GM18951 (cell line): ENCODE measurements at regions of chr10 and their contacts with region 1.

Region 1: DNA sequence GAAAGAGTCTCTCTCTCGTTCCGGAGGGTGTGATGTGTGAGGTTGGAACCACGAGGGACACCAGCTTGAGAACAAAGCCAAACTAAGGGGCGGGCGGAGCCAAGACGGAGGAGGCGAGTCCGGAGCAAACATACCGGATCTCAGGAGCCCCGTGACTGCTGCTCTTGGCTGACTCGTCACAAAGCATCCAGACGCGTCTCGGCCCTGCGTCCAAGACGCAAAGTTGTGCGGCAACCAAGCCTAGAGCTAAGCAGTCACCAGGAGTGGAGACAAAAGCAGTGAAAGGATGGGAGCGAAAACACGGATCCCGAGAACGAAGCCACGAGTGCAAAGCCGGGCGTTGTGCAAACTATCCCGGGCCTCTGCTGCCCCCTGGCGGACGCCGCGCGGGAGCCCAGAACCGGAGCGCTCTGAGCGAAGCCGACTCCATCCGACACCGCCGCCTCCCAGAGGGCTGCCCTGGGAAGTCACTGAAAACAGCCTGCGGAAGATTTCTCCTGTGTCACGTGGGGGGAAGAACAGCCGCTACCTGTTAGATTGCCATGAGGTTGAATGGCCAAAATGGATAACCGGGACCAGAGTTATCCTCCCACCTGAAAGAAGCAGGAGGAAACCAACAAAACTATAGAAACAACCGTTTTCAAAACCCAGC is 46.4 kb upstream of the TMEM72 start:
- POLR2A ChIP-seq: no peak

Region 2: DNA sequence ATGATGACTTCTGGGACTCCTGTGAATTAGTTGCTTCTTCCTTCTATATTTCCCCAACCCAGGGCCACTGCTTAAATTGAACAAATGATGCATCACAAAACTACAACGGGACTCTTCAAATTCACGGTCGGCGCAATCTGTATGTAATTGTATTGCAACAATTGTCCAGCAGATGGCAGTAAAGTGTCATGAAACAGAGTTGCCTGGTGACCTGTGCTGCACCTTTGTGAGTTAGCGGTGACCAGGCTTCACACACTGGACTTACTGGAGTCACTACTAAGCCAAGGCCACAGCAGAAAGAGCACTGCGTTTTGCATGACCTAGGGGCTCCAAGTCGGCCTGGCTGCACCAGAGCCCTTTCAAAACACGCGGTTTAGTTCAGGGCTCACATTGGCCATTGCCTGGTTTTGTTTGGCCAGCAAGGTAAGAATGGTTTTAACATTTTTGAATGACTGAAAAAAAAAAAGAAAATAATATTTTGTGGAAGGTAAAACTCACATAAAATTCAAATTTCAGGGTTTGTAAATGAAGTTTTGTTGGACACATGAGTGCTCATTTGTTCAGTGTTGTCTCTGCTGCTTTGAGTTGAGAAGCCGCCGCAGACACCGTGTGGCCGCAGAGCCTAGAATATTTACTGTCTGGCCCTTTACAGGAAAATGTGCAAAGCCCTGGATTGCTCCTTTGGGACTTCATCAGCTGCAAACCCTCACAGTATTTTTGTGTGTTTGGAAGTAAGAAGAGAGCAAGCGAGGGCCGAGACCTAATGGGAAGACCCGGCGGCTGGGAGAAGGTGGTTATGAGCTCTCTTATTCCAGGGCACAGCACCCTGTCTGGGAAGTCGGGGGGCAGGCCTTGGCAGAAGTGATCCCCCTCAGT is 1192.9 kb before region 1 on chr10:
- in situ Hi-C with region 1: loop called (anchors 25 kb)
- POLR2A ChIP-seq: no peak

Region 3: GRCh38 chr10:44386546-44387052 is 478.2 kb before region 1 on chr10:
- in situ Hi-C with region 1: loop called (anchors 25 kb)
- POLR2A ChIP-seq: no peak

Region 4: DNA sequence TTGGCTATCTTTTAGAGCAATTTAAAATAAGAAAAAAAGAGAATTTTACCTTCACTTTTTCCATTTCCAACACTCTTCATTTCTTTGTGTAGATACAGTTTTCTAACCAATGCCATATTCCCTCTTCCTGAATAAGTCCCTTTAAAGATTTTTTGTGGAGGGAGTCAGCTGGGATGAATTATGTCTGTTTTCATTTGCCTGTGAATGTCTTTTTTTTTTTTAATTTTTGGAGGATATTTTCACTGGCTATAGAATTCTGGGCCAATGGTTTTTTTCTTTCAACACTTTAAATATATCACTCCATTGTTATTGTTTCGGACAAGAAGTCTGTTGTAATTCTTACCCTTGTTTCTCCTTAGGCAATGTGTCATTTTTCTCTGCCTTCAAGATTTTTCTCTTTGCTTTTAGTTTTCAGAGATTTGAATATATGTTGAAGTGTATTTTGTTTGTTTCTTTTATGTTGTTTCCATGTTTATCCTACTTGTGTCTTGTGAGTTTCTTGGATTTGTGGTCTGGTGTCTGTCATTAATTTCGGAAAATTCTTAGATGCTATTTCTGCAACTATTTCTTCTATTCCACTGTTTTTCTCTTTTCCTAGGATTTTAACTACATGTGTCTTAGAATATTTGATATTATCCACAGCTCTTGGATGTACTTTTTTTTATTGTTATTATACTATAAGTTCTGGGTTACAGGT is 459.9 kb before region 1 on chr10:
- in situ Hi-C with region 1: no loop called
- POLR2A ChIP-seq: no peak

Region 5: GRCh38 chr10:44500451-44500850 is 364.3 kb before region 1 on chr10:
- in situ Hi-C with region 1: no loop called
- POLR2A ChIP-seq: no peak

Region 6: DNA sequence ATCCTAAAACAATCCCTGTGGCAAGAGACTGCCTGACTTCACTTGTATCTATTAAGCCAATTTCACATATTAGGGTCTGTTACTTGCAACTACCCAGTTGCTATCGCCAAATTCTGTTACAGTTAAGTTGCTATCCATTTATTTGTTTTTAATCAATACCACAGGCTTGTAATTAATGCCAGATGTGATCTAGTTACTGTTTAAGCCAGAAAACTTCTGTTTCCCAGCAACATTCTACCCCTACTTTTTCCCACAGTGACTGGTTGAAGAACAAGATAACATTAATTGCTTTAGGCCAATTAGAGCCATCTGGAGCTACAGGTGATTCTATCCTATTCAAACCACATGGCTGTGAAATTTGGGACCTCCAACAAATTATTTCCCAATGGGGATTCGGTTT is 640.5 kb after region 1 on chr10:
- in situ Hi-C with region 1: no loop called
- POLR2A ChIP-seq: no peak